ENCODE measurements at regions of chr6 and their contacts with region 1.

Region 1: DNA sequence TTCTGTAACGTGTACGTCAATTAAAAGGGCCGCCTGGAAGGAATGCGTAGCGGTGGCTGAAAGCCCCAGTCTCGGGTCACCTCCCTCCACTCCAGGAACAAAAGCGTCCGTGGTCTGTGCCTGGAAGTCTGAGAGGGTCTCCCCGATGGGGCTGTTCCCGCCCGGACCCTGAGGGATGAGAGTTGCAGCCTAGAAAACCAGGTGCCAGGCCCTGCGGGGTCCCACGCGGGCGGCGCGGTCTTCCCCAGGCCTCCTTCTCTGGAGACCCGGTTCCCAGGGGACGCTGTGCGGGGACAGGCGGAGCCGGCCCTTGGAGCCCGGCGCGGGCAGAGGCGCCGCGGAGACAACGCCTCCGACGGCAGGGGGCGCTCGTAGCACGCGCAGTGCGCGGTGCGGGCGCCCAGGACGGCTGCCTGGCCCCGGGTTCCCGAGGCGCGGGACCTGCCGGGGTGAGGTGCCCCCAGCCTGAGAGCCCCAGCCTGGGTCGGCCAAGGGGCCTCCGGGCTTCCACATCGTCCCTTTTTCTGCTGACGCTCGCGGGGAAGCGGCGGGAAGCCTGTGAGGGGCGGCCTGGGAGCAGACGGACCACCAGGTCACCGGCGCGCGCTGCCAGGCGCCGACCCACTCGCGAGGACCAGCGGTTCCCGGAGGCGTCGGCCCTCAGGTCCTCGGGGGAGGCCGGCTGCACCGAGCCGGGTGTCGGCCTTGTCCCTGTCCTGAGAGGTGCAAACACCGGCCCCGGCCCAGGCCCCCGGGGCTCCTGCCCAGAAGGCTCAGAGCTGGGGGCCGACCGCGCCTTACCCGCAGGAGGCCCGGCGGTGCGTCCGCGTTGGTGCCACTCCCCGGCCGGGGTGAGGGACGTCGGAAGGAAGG is 5.3 kb upstream of the FOXC1 start:
- DNase-seq: peak; percentile 89
- ATAC-seq: peak; percentile 91

Region 2: GRCh38 chr6:1581120-1581991 is 23.0 kb before region 1 on chr6:
- intact Hi-C with region 1: no loop called
- DNase-seq: no peak
- ATAC-seq: no peak

Region 3: DNA sequence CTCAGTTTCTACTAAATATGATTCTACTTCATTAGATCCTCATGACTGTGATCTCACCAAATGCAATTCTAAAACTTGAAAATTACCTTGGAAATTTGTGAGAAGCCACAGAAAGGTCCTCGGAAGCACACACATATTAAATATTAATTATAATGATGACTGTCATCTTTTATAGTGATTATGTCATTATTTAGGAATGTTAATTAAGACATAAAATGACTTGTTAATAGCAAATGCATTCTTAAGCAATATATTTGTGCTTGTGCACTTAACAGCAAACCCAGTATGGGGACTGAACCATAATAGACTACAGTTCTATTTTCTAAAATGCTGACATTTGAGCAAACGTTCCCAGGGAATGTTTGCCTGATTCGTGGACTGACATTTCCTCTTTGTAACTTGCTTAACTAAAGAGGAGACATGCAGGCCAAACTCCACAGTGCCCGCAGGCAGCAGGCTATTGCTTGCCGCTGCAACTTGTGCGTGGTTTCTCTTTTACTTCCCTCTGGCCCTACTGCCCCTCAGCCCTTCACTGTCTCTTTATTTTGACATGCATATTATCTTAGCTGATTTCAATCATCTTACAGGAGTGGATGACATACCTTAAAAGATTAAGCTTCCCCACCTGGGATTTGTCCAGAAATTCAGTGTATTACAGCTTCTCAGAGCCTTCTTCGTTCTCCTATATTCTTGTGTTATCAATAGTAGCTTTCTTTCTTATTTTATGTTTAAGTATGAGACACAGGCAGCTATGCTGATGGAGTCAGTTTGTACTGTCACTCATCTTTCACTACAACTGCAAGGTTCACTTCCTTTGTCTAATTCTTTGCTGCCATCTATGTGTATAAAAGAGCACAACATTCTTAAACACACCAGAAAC is 499.5 kb after region 1 on chr6:
- intact Hi-C with region 1: loop called (anchors 1 kb)
- DNase-seq: peak; percentile 60
- ATAC-seq: no peak

Region 4: GRCh38 chr6:2353412-2354137 is 749.2 kb after region 1 on chr6:
- intact Hi-C with region 1: loop called (anchors 2 kb)
- DNase-seq: peak; percentile 69
- ATAC-seq: peak; percentile 60

Region 5: GRCh38 chr6:2448820-2449571 is 844.6 kb after region 1 on chr6:
- intact Hi-C with region 1: loop called (anchors 5 kb)
- DNase-seq: no peak
- ATAC-seq: no peak

Measured in Right ventricle myocardium inferior (tissue), 1 donor.